Naive thymus-derived CD4-positive, alpha-beta T cell (primary cell): ENCODE measurements at regions of chr11 and their contacts with region 1.

Region 1: DNA sequence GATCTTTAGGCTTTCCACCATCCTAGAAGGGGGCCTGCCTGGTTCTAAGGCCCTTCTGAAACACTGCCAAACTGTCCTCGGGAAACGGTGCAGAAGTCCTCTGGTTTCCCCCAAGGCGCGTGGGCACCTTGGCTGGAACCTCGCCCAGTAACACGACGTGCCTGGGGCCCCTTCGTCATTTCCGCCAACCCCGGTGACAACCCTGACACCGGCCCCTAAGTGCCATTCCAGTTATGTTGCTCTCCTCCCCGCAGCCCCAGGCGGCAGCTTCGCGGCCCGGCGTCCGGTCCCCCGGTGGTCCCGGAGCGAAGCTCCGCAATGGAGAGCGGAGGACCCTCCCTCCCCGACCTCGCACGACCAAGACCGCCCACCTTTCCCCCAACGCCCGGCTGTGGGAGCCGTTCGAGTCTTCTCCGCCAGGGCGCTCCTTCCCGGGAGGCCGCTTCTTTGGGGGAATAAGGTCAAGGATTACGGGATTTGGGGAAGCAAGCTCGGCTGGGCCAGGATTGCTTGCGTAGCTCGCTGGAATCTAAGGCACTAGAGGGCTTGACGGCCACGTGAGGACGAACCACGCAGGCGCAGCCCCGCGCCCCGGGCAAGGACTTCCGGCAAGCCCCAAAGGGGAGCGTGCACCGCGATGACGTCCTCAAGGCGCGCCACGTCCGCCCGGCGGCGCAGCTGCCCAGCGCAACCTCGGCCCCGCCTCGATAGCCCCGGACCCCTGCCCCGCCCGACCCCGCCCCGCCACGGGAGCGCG is 626 bp downstream of the RNH1 start:
- DNase-seq: peak; percentile 95 to 98 (median 97)
- ATAC-seq: peak; percentile 79
- H3K4me3 ChIP-seq: peak overlapping the region; percentile 99
- H3K4me3 Mint-ChIP-seq: peak overlapping the region; percentile 93 to 99 (median 96)
- H3K27ac ChIP-seq: peak overlapping the region; percentile 99
- H3K27ac Mint-ChIP-seq: peak overlapping the region; percentile 98 to 100 (median 99)
- H3K4me1 ChIP-seq: peaks cover 12 to 26% of the 10 kb centered on the region in 2 donors
- H3K4me1 Mint-ChIP-seq: peaks cover 5 to 34% (median 21%) of the 10 kb centered on the region in 7 donors
- H3K27me3 ChIP-seq: no peaks in the 10 kb centered on the region
- H3K27me3 Mint-ChIP-seq: no peaks in the 10 kb centered on the region

Region 2: GRCh38 chr11:304915-305843 is 201.2 kb before region 1 on chr11:
- CTCF ChIA-PET with region 1: no interaction called
- POLR2A ChIA-PET with region 1: interaction called, 3 read pairs
- intact Hi-C with region 1: loop called (anchors 5 kb)
- DNase-seq: peak in 6 of 9 donors; percentile 62 to 76 (median 70)
- ATAC-seq: peak; percentile 44
- H3K4me3 ChIP-seq: no peak overlapping the region
- H3K4me3 Mint-ChIP-seq: peak overlapping the region in 7 of 10 donors; percentile 0 to 55 (median 47)
- H3K27ac ChIP-seq: peak overlapping the region; percentile 95
- H3K27ac Mint-ChIP-seq: peak overlapping the region; percentile 14 to 97 (median 84)
- H3K4me1 ChIP-seq: peaks cover 21 to 24% of the 10 kb centered on the region in 2 donors
- H3K4me1 Mint-ChIP-seq: peaks cover 29 to 61% (median 48%) of the 10 kb centered on the region in 7 donors
- H3K27me3 ChIP-seq: no peaks in the 10 kb centered on the region
- H3K27me3 Mint-ChIP-seq: peaks cover 0 to 9% (median 0%) of the 10 kb centered on the region in 5 donors

Region 3: GRCh38 chr11:416757-417621 is 89.4 kb before region 1 on chr11:
- CTCF ChIA-PET with region 1: no interaction called
- POLR2A ChIA-PET with region 1: interaction called, 17 read pairs
- intact Hi-C with region 1: loop called (anchors 1 to 2 kb)
- DNase-seq: peak; percentile 34 to 71 (median 47)
- ATAC-seq: peak; percentile 38
- H3K4me3 ChIP-seq: peak overlapping the region; percentile 92
- H3K4me3 Mint-ChIP-seq: peak overlapping the region; percentile 48 to 100 (median 96)
- H3K27ac ChIP-seq: peak overlapping the region; percentile 75
- H3K27ac Mint-ChIP-seq: peak overlapping the region in 4 of 9 donors; percentile 68 to 78 (median 70)
- H3K4me1 ChIP-seq: peaks cover 11 to 21% of the 10 kb centered on the region in 2 donors
- H3K4me1 Mint-ChIP-seq: peaks cover 10 to 37% (median 17%) of the 10 kb centered on the region in 7 donors
- H3K27me3 ChIP-seq: no peaks in the 10 kb centered on the region
- H3K27me3 Mint-ChIP-seq: no peaks in the 10 kb centered on the region

Region 4: DNA sequence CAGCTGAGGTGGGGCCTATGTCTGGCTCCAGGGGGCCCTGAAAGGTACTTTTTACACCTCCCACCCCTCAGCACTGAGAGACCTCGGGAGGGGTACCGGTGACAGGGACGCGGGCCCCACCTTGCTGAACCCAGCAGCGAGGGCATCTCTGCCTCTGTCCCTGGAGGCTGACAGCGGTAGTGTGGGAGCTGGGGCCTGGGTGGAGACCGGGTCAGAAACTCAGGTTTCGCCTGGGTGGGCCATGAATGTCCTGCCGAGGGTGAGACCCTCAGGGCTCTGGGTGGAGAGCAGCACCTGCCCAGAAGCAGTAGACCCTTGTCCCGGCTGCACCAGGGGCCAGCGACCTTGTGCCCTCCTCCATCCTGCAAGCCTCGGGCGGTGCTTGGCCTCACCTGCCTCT is 34.1 kb before region 1 on chr11:
- CTCF ChIA-PET with region 1: no interaction called
- POLR2A ChIA-PET with region 1: no interaction called
- intact Hi-C with region 1: no loop called
- DNase-seq: no peak
- ATAC-seq: no peak
- H3K4me3 ChIP-seq: no peak overlapping the region
- H3K4me3 Mint-ChIP-seq: no peak overlapping the region
- H3K27ac ChIP-seq: no peak overlapping the region
- H3K27ac Mint-ChIP-seq: no peak overlapping the region
- H3K4me1 ChIP-seq: no peaks in the 10 kb centered on the region
- H3K4me1 Mint-ChIP-seq: peaks cover 0 to 6% (median 0%) of the 10 kb centered on the region in 7 donors
- H3K27me3 ChIP-seq: no peaks in the 10 kb centered on the region
- H3K27me3 Mint-ChIP-seq: no peaks in the 10 kb centered on the region

Region 5: DNA sequence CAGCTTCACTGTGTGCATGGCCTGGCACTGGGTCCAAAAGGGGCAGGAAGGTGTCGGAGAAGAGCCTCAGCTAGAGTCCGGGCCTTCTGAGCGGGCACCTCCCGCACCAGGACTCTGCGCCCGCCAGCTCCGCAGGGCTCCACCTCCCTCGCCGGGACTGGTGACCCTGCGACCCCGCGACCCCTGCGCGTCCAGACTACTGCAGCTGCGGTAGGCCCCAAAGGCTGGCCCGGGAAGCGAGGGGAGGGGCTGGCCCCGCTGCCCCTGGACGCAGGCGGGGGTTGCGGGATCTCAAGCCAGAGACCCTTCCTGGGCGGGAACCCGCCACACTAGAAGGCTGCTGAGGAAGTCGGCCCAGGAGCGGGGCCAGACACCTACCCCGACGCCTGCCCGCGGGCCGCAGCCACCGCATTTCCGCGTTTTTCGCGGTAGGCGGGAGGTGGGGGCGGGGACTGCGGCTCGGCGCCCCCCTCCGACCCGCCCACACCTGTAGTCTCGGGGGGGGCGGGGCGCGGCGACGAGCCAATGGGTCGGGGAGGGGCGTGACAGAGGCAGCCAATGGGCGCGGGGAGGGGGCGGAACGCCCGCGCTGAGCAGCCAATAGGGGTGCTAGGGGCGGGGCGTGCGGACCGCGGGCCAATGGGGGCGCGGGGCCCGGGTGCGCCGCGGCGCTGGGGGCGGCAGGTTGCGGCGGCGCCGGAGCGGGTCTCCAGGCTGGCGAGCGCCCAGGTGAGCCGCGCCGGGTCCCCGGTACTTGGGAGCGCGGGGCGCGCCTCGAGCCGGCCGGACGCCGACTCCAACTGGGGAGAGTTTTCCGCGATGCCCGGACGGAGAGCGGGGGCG is 54.1 kb after region 1 on chr11 and contains the starts of genes LMNTD2 and RASSF7:
- CTCF ChIA-PET with region 1: no interaction called
- POLR2A ChIA-PET with region 1: interaction called, 6 read pairs
- intact Hi-C with region 1: loop called in 1 of 2 experiments (anchors 1 kb)
- DNase-seq: peak; percentile 89 to 98 (median 94)
- ATAC-seq: peak; percentile 98
- H3K4me3 ChIP-seq: peak within 1 kb of the TSS; percentile 68
- H3K4me3 Mint-ChIP-seq: peak within 1 kb of the TSS; percentile 78 to 94 (median 89)
- H3K27ac ChIP-seq: peak within 1 kb of the TSS; percentile 82
- H3K27ac Mint-ChIP-seq: peak within 1 kb of the TSS; percentile 35 to 93 (median 84)
- H3K4me1 ChIP-seq: peaks cover 14 to 17% of the 10 kb centered on the region in 2 donors
- H3K4me1 Mint-ChIP-seq: peaks cover 4 to 17% (median 9%) of the 10 kb centered on the region in 7 donors
- H3K27me3 ChIP-seq: no peaks in the 10 kb centered on the region
- H3K27me3 Mint-ChIP-seq: peaks cover 0 to 18% (median 0%) of the 10 kb centered on the region in 5 donors
- total RNA-seq, gene LMNTD2: 2.8 to 14.7 (median 9.6) TPM
- total RNA-seq, gene RASSF7: 20.0 to 45.4 (median 35.5) TPM

Region 6: GRCh38 chr11:695538-696248 is 189.3 kb after region 1 on chr11 and contains the start of gene TMEM80:
- CTCF ChIA-PET with region 1: no interaction called
- POLR2A ChIA-PET with region 1: no interaction called
- intact Hi-C with region 1: loop called (anchors 1 kb)
- DNase-seq: peak; percentile 91 to 98 (median 98)
- ATAC-seq: peak; percentile 76
- H3K4me3 ChIP-seq: peak within 1 kb of the TSS; percentile 97
- H3K4me3 Mint-ChIP-seq: peak within 1 kb of the TSS; percentile 84 to 92 (median 89)
- H3K27ac ChIP-seq: peak within 1 kb of the TSS; percentile 100
- H3K27ac Mint-ChIP-seq: peak within 1 kb of the TSS; percentile 88 to 98 (median 95)
- H3K4me1 ChIP-seq: peaks cover 13 to 42% of the 10 kb centered on the region in 2 donors
- H3K4me1 Mint-ChIP-seq: peaks cover 40 to 56% (median 52%) of the 10 kb centered on the region in 7 donors
- H3K27me3 ChIP-seq: no peaks in the 10 kb centered on the region
- H3K27me3 Mint-ChIP-seq: no peaks in the 10 kb centered on the region
- total RNA-seq, gene TMEM80: 26.2 to 44.3 (median 40.4) TPM

Region 7: GRCh38 chr11:1262172-1263006 is 756.0 kb after region 1 on chr11:
- CTCF ChIA-PET with region 1: no interaction called
- POLR2A ChIA-PET with region 1: no interaction called
- intact Hi-C with region 1: loop called in 1 of 2 experiments (anchors 5 kb)
- DNase-seq: peak; percentile 72 to 91 (median 84)
- ATAC-seq: peak; percentile 93
- H3K4me3 ChIP-seq: peak overlapping the region; percentile 77
- H3K4me3 Mint-ChIP-seq: peak overlapping the region; percentile 74 to 90 (median 85)
- H3K27ac ChIP-seq: peak overlapping the region; percentile 89
- H3K27ac Mint-ChIP-seq: peak overlapping the region; percentile 78 to 95 (median 91)
- H3K4me1 ChIP-seq: peaks cover 13 to 15% of the 10 kb centered on the region in 2 donors
- H3K4me1 Mint-ChIP-seq: peaks cover 0 to 34% (median 12%) of the 10 kb centered on the region in 7 donors
- H3K27me3 ChIP-seq: no peaks in the 10 kb centered on the region
- H3K27me3 Mint-ChIP-seq: no peaks in the 10 kb centered on the region